IMR-90 (cell line): ENCODE measurements at regions of chr19 and their contacts with region 1.

Region 1: GRCh38 chr19:51338563-51339312 is 3.2 kb downstream of the VSIG10L start:
- DNase-seq: peak; percentile 61
- ATAC-seq: peak; percentile 74
- H3K4me3 ChIP-seq: peak overlapping the region; percentile 55
- H3K27ac ChIP-seq: no peak overlapping the region
- H3K4me1 ChIP-seq: no peaks in the 10 kb centered on the region
- H3K27me3 ChIP-seq: no peaks in the 10 kb centered on the region
- CTCF ChIP-seq: peak; percentile 80
- POLR2A ChIP-seq: no peak
- RAD21 ChIP-seq: peak; percentile 73

Region 2: DNA sequence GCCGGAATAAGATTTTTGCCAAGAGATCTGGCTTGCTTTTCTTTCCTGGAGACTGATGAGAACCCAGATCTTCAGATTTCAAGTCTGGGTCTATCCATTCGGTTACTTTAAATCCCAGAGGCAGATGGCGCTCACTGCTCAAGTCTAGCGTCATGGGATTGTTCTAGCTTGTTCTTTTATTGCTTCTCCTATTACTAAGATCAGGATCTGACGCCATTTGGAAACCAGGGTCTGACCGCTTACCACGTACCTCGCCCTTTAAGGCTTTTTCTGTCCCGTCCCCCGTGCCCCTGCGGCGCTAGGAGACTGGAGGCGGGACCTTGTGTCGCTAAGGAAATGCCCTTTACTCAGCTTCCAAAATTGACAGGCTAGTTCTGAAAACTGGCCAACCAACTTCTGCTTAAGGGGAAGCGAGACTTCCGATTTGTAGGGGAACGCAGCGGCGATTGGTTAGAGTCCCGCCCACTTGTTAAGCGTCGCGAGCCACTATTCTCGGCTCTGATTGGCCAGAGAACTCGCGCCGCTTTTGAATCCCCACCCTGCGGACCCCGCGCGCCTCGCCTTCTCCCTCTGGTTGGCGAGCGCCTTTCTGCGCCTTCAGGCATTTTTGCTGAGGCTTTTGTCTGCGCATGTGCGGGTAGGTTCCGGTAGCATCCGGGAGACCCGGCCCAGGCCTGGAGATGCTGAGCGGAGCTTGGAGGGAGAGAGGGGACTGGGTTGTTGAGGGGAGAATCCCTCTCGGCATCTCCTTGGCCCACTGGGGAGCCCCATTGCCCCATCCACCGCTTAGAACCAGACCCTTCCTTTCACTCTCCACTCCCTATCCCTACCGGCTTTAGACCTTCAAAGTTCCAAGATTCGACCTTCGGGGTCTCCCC is 55.5 kb after region 1 on chr19:
- CTCF ChIA-PET with region 1: no interaction called
- POLR2A ChIA-PET with region 1: no interaction called
- dilution Hi-C with region 1: no loop called
- in situ Hi-C with region 1: no loop called
- intact Hi-C with region 1: loop called (anchors 2 kb)
- DNase-seq: peak; percentile 99
- ATAC-seq: peak; percentile 98
- H3K4me3 ChIP-seq: peak overlapping the region; percentile 56
- H3K27ac ChIP-seq: peak overlapping the region; percentile 71
- H3K4me1 ChIP-seq: no peaks in the 10 kb centered on the region
- H3K27me3 ChIP-seq: no peaks in the 10 kb centered on the region
- CTCF ChIP-seq: no peak
- POLR2A ChIP-seq: 0 out of 2 replicates have a peak, but pooled peaks have one; percentile 46
- RAD21 ChIP-seq: no peak

Region 3: GRCh38 chr19:51473009-51473707 is 134.4 kb after region 1 on chr19:
- CTCF ChIA-PET with region 1: interaction called, 3 read pairs
- POLR2A ChIA-PET with region 1: no interaction called
- dilution Hi-C with region 1: no loop called
- in situ Hi-C with region 1: no loop called
- intact Hi-C with region 1: loop called (anchors 1 kb)
- DNase-seq: peak; percentile 59
- ATAC-seq: peak; percentile 88
- H3K4me3 ChIP-seq: no peak overlapping the region
- H3K27ac ChIP-seq: no peak overlapping the region
- H3K4me1 ChIP-seq: no peaks in the 10 kb centered on the region
- H3K27me3 ChIP-seq: no peaks in the 10 kb centered on the region
- CTCF ChIP-seq: peak; percentile 69
- POLR2A ChIP-seq: no peak
- RAD21 ChIP-seq: peak; percentile 75

Region 4: DNA sequence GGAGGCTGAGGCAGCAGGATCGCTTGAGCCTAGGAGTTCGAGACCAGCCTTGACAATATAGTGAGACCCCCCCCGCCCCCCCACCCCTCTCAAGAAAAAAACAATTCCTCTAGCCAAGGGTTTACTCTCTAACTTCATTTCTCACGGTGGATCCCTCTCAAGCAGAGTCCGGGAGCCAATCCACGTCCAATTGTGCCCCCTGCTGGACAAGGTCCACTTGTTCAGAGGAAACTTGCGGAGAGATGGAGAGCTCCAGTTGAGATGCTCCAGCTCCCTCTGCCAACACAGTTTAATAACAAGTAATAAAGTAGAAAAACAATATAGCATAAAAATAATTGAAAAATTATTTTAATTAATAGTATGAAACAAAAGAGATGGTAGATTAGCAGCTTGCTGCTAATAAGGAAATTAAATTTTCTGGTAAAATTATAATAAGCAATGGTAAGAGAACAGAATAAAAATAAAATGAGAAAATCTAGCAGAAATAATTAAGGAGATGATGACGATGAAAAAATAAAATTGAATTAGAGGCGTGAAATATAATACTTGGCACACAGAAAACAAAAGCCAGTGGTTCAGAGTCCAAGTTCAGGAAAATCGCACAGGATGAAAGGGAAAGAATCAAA is 322.4 kb after region 1 on chr19:
- CTCF ChIA-PET with region 1: no interaction called
- POLR2A ChIA-PET with region 1: no interaction called
- dilution Hi-C with region 1: no loop called
- in situ Hi-C with region 1: no loop called
- intact Hi-C with region 1: loop called (anchors 1 kb)
- DNase-seq: peak; percentile 72
- ATAC-seq: peak; percentile 89
- H3K4me3 ChIP-seq: no peak overlapping the region
- H3K27ac ChIP-seq: no peak overlapping the region
- H3K4me1 ChIP-seq: no peaks in the 10 kb centered on the region
- H3K27me3 ChIP-seq: no peaks in the 10 kb centered on the region
- CTCF ChIP-seq: peak; percentile 61
- POLR2A ChIP-seq: no peak
- RAD21 ChIP-seq: peak; percentile 67